Adrenal gland (tissue), 19 donors: ENCODE measurements at regions of chr17 and their contacts with region 1.

Region 1: DNA sequence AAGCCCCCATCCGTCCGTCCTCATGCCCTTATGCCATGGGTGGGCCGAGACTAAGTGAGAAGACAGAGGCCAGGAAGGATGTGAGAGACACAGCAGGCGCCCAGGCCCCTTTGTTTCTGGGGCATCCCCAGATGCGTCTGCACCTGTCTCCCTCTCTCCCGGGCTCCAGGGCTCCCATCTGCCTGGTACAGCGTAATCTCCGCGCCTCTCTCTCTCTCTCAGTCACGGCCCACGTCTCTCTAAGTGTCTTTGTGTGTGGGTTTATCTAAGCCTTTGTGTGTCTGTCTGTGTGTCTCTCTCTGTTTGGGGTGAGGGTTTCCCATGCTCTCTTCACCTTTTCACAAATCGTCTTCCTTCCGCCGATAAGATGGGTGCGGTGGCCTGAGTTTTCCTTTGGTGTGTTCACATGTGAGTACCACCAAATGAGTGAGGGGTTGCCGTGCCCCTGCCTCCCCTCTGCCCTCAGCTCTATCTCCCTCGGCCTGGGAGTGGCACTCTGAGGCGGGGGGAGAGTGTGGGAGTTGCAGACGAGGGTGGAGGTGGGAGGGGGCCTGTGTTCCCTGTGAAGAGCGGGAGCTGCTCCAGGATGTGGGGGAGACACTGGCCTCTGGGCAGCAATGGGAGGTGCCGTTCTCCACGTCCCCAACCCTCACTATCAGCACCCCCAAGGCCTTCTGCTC is 25.8 kb upstream of the ABCC3 start:
- DNase-seq: no peak
- H3K4me3 ChIP-seq: no peak overlapping the region
- H3K27ac ChIP-seq: no peak overlapping the region
- H3K4me1 ChIP-seq: peaks cover 0 to 8% of the 10 kb centered on the region in 2 donors
- H3K27me3 ChIP-seq: no peaks in the 10 kb centered on the region
- CTCF ChIP-seq: no peak
- POLR2A ChIP-seq: no peak

Region 2: DNA sequence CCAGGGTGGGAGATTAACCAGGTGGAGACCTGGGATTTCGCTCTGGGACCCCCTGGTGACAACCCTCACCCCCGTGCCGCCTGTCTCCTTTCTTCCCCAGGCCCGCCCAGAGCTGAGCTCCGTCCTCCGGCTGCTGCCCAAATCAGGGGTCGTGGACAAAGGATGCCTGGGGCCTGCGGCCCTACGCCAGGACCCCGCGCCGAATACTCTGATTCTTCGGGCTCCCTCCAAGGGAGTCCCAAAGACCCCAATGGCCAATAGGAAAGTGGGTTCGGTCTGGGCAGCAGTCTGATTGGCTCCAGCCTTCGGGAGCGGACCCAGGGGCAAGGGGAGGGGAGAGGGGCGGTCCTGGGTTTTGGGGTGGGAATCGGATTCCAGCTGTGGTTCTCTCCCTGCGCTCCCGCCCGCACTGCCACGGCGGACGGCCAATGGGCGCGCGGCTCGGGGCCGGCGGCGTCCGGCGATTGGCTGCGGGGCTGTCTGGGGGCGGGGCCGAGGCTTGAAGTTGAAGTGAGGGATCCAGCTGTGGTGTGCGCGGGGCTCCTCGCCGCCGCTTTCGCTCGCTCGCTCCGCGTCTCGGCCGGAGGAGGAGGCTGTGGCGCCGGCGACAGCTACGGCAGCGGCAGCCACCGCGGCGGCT is 48.5 kb before region 1 on chr17 and contains the start of gene CACNA1G:
- intact Hi-C with region 1: loop called in 1 of 2 experiments (anchors 5 kb)
- DNase-seq: peak; percentile 86 to 93 (median 91)
- H3K4me3 ChIP-seq: peak within 1 kb of the TSS in 2 of 4 donors; percentile 15 to 54
- H3K27ac ChIP-seq: no peak within 1 kb of the TSS
- H3K4me1 ChIP-seq: peaks cover 22 to 28% of the 10 kb centered on the region in 2 donors
- H3K27me3 ChIP-seq: peaks cover 13% of the 10 kb centered on the region
- CTCF ChIP-seq: no peak
- POLR2A ChIP-seq: no peak
- total RNA-seq, gene CACNA1G: 0.06 to 2.6 (median 0.20) TPM in 8 of 9 donors, not detected in the other